IMR-90 (cell line): ENCODE measurements at regions of chr4 and their contacts with region 1.

Region 1: DNA sequence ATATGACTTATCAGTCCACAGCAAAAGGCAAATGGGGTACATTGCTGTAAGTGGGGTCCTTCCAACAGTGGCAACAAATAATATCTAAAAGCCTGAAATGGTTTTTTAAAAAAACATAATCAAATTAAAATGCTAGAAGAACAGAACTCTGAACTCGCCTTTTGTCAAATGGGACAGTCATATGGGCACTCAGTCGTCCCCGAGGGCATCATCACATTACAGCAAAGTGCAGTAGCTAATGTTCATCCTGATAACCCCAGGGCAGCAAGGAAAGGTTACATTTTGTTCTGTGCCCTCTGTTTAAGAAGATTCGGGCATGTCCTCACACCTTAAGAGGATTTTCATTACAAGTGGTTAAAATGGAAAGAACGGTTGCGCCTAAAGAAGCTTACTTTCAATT is 997.9 kb upstream of the TENM3 start:
- DNase-seq: no peak
- ATAC-seq: no peak
- H3K4me3 ChIP-seq: no peak overlapping the region
- H3K27ac ChIP-seq: no peak overlapping the region
- H3K4me1 ChIP-seq: no peaks in the 10 kb centered on the region
- H3K27me3 ChIP-seq: no peaks in the 10 kb centered on the region
- CTCF ChIP-seq: no peak
- POLR2A ChIP-seq: no peak
- RAD21 ChIP-seq: no peak

Region 2: GRCh38 chr4:181161669-181162068 is 83.7 kb before region 1 on chr4:
- CTCF ChIA-PET with region 1: no interaction called
- POLR2A ChIA-PET with region 1: no interaction called
- dilution Hi-C with region 1: no loop called
- in situ Hi-C with region 1: no loop called
- intact Hi-C with region 1: no loop called
- DNase-seq: no peak
- ATAC-seq: no peak
- H3K4me3 ChIP-seq: no peak overlapping the region
- H3K27ac ChIP-seq: no peak overlapping the region
- H3K4me1 ChIP-seq: no peaks in the 10 kb centered on the region
- H3K27me3 ChIP-seq: no peaks in the 10 kb centered on the region
- CTCF ChIP-seq: no peak
- POLR2A ChIP-seq: no peak
- RAD21 ChIP-seq: no peak

Region 3: DNA sequence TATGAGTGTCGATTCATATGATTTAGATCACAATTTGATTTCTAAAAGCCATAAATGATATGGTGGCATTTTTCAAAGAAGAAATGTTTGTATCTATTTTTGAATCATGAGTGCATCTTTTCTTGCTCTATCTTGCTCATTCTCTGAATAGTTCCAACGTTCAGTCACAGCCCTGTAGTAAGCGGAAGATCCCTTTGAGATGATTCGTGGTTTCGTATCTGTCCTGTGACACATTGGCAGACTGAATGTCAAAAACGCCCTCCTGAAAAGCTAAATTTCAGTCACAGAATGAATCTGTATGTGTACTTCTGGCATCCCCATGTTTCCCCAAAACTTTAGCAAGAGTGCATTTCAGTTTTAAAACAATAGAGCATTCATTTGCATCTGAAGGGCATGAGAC is 69.0 kb before region 1 on chr4:
- CTCF ChIA-PET with region 1: no interaction called
- POLR2A ChIA-PET with region 1: interaction called, 12 read pairs
- dilution Hi-C with region 1: no loop called
- in situ Hi-C with region 1: no loop called
- intact Hi-C with region 1: no loop called
- DNase-seq: peak; percentile 5
- ATAC-seq: no peak
- H3K4me3 ChIP-seq: no peak overlapping the region
- H3K27ac ChIP-seq: no peak overlapping the region
- H3K4me1 ChIP-seq: no peaks in the 10 kb centered on the region
- H3K27me3 ChIP-seq: no peaks in the 10 kb centered on the region
- CTCF ChIP-seq: no peak
- POLR2A ChIP-seq: no peak
- RAD21 ChIP-seq: no peak

Region 4: DNA sequence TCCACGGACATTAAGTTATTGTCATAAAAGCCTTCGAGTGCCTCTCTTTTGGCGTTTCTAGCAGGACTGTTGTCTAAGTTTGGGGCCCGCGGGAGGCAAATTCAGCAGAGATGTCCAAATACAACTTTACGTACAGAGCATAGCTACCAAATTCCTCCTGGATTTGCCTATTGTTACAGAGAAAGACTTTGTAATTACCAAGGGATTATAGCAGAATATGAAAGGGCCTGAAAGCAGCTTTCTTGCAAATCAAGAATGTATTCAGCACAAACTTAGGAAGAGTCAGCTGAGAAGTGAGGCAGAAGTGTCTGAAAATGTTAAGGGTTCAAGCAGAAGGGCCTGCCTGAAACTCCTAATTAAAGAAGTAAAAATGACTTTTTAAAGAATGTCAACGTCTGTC is 55.6 kb before region 1 on chr4:
- CTCF ChIA-PET with region 1: no interaction called
- POLR2A ChIA-PET with region 1: no interaction called
- dilution Hi-C with region 1: no loop called
- in situ Hi-C with region 1: no loop called
- intact Hi-C with region 1: no loop called
- DNase-seq: no peak
- ATAC-seq: no peak
- H3K4me3 ChIP-seq: no peak overlapping the region
- H3K27ac ChIP-seq: no peak overlapping the region
- H3K4me1 ChIP-seq: no peaks in the 10 kb centered on the region
- H3K27me3 ChIP-seq: no peaks in the 10 kb centered on the region
- CTCF ChIP-seq: no peak
- POLR2A ChIP-seq: no peak
- RAD21 ChIP-seq: no peak

Region 5: GRCh38 chr4:181388061-181388460 is 142.7 kb after region 1 on chr4:
- CTCF ChIA-PET with region 1: no interaction called
- POLR2A ChIA-PET with region 1: no interaction called
- dilution Hi-C with region 1: no loop called
- in situ Hi-C with region 1: no loop called
- intact Hi-C with region 1: no loop called
- DNase-seq: no peak
- ATAC-seq: no peak
- H3K4me3 ChIP-seq: no peak overlapping the region
- H3K27ac ChIP-seq: no peak overlapping the region
- H3K4me1 ChIP-seq: no peaks in the 10 kb centered on the region
- H3K27me3 ChIP-seq: no peaks in the 10 kb centered on the region
- CTCF ChIP-seq: no peak
- POLR2A ChIP-seq: no peak
- RAD21 ChIP-seq: no peak